HCT116 (cell line): ENCODE measurements at regions of chr5 and their contacts with region 1.

Region 1: DNA sequence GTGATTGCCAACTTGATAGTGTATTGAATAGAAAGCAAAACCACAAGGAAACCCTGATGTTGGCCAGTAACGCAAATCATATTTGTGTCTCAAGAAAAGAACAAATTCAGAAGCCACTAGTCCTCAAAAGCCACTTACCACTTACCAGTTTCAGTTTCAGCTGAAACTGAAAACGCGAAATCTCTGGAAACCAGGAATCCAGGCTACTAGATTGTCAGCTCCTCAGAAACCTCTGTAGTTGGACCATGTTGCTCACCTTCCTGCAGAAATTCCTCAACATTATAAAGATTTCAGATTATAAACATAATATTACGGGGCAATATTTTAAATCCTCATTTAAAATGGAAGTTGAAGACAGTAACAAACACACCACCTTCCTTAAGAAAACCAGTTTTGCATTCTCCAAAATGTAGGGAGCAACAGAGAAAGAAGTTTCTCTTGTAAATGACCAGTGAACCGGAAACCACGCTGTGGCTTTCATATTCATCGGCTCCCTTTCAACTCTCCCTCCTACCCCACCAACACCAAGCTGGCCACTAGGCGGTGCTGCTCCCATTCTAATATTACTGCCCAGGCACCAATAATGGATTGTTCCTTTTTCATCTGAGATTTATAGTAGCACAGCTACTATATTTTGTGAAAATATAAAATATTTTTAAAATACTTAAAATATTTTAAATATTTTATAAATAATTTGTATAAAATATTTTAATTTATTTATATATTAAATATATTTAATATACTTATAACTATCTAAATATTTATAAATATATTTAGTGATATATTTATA is 8.7 kb upstream of the TMED7 start:
- DNase-seq: peak; percentile 70
- ATAC-seq: peak; percentile 92
- H3K4me3 ChIP-seq: peak overlapping the region in 1 of 2 experiments; percentile 13; a peak in 3 of 4 replicates
- H3K27ac ChIP-seq: no peak overlapping the region
- H3K4me1 ChIP-seq: peaks cover 4 to 34% of the 10 kb centered on the region in 2 experiments; a peak in 3 of 4 replicates
- H3K27me3 ChIP-seq: no peaks in the 10 kb centered on the region
- CTCF ChIP-seq: peak; percentile 81 to 89 (median 85)
- POLR2A ChIP-seq: no peak
- RAD21 ChIP-seq: peak; percentile 96

Region 2: DNA sequence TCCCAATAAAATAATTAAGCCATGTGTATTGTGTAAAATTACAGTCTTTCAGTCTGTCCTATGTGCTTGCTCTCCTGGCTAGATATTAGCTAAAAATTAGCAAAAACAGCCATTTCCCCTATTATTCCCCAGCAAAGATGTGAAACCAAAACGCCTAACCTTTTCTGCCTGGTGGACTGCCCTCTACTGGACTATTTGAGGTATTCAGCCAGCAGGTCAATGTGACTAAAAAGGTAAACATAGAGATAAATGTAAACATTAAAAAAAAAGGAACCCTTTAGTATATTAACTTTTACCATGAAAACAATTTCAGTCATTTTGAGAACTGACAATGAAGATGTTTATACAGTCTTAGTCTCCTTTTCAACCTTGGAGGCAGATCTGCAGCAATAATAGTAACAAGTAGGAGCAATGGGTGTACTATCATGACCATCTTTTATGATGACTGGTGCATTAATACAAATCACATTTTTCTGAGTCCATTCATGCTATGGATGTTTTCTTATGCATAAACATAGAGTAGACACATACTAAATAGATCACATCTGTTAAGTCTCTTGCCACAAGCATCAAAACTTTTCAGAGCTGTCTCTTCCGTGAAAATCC is 196.7 kb after region 1 on chr5:
- CTCF ChIA-PET with region 1: interaction called, 10 read pairs
- POLR2A ChIA-PET with region 1: interaction called, 3 read pairs
- RAD21 ChIA-PET with region 1: no interaction called
- intact Hi-C with region 1: loop called (anchors 2 kb)
- DNase-seq: no peak
- ATAC-seq: 0 out of 2 replicates have a peak, but pooled peaks have one; percentile 45
- H3K4me3 ChIP-seq: no peak overlapping the region
- H3K27ac ChIP-seq: no peak overlapping the region
- H3K4me1 ChIP-seq: no peaks in the 10 kb centered on the region
- H3K27me3 ChIP-seq: no peaks in the 10 kb centered on the region
- CTCF ChIP-seq: peak; percentile 43 to 82 (median 75); a peak in 5 of 6 replicates
- POLR2A ChIP-seq: no peak
- RAD21 ChIP-seq: peak; percentile 61

Region 3: DNA sequence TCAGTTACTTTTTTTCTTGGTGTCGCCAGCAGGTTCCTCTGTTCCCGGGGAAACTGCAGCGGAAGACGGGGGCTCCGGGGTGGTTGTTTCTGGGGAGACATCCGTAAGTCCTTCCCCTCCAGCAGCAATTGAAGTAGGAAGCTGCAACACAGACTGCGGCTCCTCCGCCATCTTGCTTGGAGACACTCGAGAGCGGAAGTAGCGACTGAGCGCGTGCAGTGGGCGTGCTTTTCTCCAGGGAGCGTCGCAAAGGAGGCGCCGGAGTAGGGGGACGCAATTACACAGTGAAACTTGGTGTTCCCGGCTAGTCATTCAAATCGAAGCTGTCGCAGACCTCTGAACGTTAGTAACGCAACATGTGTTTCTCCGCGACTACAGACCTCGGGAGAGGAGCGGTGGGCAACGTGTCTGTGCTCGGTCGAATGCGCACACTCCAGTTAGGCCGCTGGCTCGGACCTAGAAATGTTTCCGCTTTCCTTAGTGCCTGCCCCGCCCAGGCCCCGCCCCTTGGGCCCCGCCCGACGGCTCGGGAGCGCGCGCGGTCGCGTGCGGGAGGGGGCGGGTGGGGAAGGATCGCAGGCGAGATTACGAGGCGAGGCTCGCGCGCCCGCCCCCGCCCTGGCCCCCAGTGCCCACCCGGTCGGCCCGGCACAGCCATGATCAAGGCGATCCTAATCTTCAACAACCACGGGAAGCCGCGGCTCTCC is 207.0 kb after region 1 on chr5 and contains the starts of genes AP3S1 and ATG12:
- CTCF ChIA-PET with region 1: interaction called, 5 read pairs
- POLR2A ChIA-PET with region 1: no interaction called
- RAD21 ChIA-PET with region 1: interaction called in 1 of 2 experiments, 6 read pairs
- intact Hi-C with region 1: loop called (anchors 2 kb)
- DNase-seq: peak; percentile 91
- ATAC-seq: peak; percentile 77
- H3K4me3 ChIP-seq: peak within 1 kb of the TSS; percentile 83 to 87
- H3K27ac ChIP-seq: peak within 1 kb of the TSS; percentile 96
- H3K4me1 ChIP-seq: peaks cover 33 to 66% of the 10 kb centered on the region in 2 experiments
- H3K27me3 ChIP-seq: no peaks in the 10 kb centered on the region
- CTCF ChIP-seq: no peak
- POLR2A ChIP-seq: peak; percentile 58
- RAD21 ChIP-seq: no peak
- total RNA-seq, gene AP3S1: 432 TPM
- total RNA-seq, gene ATG12: 270 TPM

Region 4: GRCh38 chr5:116032094-116032517 is 397.6 kb after region 1 on chr5 and contains the start of gene ARL14EPL:
- CTCF ChIA-PET with region 1: no interaction called
- POLR2A ChIA-PET with region 1: interaction called, 4 read pairs
- RAD21 ChIA-PET with region 1: no interaction called
- intact Hi-C with region 1: loop called (anchors 1 kb)
- DNase-seq: peak; percentile 99
- ATAC-seq: peak; percentile 97
- H3K4me3 ChIP-seq: peak within 1 kb of the TSS in 1 of 2 experiments; percentile 3; a peak in 1 of 4 replicates
- H3K27ac ChIP-seq: peak within 1 kb of the TSS; percentile 52
- H3K4me1 ChIP-seq: peaks cover 21 to 61% of the 10 kb centered on the region in 2 experiments
- H3K27me3 ChIP-seq: no peaks in the 10 kb centered on the region
- CTCF ChIP-seq: peak in 2 of 3 experiments; percentile 40 to 56; a peak in 3 of 6 replicates
- POLR2A ChIP-seq: no peak
- RAD21 ChIP-seq: peak; percentile 94
- total RNA-seq, gene ARL14EPL: 22.9 TPM

Region 5: DNA sequence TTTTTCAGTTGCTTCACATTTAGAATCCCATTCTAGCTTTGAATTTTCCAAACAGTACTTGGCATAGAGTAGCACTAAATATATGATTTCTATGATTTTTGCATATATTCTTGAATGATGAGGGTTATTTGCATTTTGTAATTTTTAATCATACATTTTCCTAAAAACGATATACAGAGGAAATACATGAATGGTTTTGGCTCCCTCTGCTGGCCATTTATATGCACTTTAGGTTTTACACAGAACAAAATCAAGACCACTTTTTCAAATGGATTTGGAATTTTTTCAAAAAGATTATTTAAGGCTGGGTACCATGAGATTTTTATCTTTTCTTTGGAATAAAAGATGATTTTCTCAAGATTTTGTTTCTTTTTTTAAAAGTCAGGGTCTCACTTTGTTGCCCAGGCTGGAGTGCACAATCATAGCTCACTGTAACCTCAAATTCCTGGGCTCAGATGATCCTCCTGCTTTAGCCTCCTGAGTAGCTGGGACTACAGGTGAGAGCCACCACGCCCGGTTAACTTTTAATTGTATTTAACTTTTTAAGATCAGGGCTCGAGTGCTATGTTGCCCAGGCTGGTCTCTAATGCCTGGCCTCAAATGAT is 433.6 kb after region 1 on chr5:
- CTCF ChIA-PET with region 1: interaction called, 13 read pairs
- POLR2A ChIA-PET with region 1: no interaction called
- RAD21 ChIA-PET with region 1: interaction called in 1 of 2 experiments, 5 read pairs
- intact Hi-C with region 1: loop called (anchors 1 kb)
- DNase-seq: peak; percentile 78
- ATAC-seq: peak; percentile 76
- H3K4me3 ChIP-seq: no peak overlapping the region
- H3K27ac ChIP-seq: no peak overlapping the region; the same call in 1 of the 2 replicates
- H3K4me1 ChIP-seq: peaks cover 4 to 31% of the 10 kb centered on the region in 2 experiments; a peak in 3 of 4 replicates
- H3K27me3 ChIP-seq: no peaks in the 10 kb centered on the region
- CTCF ChIP-seq: peak; percentile 79 to 99 (median 83)
- POLR2A ChIP-seq: no peak
- RAD21 ChIP-seq: peak; percentile 98